Dorsolateral prefrontal cortex (tissue), 120 donors: ENCODE measurements at regions of chr6 and their contacts with region 1.

Region 1: DNA sequence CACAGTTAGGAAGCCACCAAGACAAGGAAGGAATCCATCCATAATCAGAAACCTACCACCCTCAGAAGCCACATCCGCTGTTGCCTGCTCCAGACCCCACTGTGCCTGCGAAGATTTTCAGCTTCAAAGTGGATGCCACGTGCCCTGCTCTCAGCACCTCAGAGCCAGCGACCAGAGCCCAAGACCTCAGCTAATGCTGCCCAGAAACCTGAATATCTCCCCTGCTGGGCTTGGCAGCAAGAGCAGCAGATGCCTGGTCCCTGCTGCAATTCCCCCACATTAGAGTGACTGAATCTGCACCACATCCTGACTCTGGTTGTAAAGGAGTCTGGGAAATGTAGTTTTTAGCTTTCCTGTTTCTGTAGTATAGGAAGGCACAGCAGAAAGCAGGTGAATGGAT is 10.7 kb upstream of the ULBP3 start:
- DNase-seq: peak in 1 of 10 donors; percentile 38
- H3K4me3 ChIP-seq: peak overlapping the region in 34 of 59 donors; percentile 4 to 48 (median 28)
- H3K27ac ChIP-seq: peak overlapping the region in 9 of 59 donors; percentile 13 to 70 (median 42)
- H3K27me3 ChIP-seq: peaks cover 0 to 8% (median 0%) of the 10 kb centered on the region in 45 donors
- CTCF ChIP-seq: no peak

Region 2: DNA sequence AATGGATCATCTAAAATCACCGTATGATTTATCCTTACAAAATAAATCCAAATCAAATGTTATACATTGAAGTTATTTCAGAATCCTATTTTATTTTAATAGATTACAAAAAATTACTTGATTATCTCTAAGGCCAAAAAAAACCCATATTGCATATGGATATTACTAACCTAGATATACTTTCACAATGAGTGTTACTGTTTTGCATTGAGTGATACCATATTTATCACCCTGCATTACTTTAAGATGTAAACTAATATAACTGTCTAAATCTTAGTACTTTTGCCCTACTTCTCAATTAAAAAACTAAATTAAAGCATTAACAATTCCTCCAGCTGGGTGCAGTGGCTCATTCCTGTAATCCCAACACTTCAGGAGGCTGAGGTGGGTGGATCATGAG is 544.9 kb before region 1 on chr6:
- intact Hi-C with region 1: no loop called
- DNase-seq: no peak
- H3K4me3 ChIP-seq: no peak overlapping the region
- H3K27ac ChIP-seq: no peak overlapping the region
- H3K27me3 ChIP-seq: no peaks in the 10 kb centered on the region
- CTCF ChIP-seq: no peak

Region 3: GRCh38 chr6:149963462-149964307 is 115.9 kb before region 1 on chr6 and contains the start of gene ULBP1:
- intact Hi-C with region 1: no loop called
- DNase-seq: peak in 7 of 10 donors; percentile 41 to 96 (median 68)
- H3K4me3 ChIP-seq: peak within 1 kb of the TSS; percentile 18 to 70 (median 48)
- H3K27ac ChIP-seq: peak within 1 kb of the TSS in 1 of 59 donors; percentile 70
- H3K27me3 ChIP-seq: peaks cover 0 to 88% (median 58%) of the 10 kb centered on the region in 45 donors
- CTCF ChIP-seq: peak in 2 of 56 donors; percentile 11 to 17
- total RNA-seq, gene ULBP1: 0.12 to 1.1 (median 0.26) TPM in 58 of 120 experiments, not detected in the others

Region 4: DNA sequence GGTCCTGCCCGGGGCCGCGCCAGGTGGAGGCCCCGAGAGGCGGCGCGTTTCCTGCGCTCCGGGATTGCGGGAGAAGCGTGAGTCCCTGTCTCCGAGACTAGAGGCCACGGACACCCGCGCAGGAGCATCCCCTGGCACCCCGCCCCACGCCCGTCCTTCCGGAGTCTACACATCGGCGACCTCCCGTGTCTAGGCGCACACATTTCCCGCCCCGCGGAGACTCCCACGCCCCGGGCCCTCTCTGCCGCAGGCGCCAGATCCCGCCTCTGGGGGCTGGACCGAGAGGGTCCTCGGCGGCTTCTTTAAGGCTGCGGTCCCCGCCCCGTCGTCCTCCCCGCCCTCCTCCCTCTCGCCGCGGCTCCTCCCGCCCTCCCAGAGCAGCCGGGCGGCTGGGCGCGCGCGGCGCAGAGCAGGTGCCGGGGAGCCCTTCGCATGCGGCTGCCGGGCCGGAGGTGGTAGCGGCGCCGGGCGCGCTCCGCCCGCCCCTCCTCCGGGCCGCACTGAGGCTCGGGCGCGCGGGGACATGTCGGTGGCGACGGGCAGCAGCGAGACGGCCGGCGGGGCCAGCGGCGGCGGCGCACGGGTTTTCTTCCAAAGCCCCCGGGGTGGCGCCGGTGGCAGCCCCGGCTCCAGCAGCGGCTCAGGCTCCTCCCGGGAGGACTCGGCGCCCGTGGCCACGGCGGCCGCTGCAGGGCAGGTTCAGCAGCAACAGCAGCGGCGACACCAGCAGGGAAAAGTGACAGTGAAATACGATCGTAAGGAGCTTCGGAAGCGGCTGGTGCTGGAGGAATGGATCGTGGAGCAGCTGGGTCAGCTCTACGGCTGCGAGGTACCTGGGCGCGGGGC is 63.3 kb after region 1 on chr6 and contains the start of gene PPP1R14C:
- intact Hi-C with region 1: loop called in 1 of 2 experiments (anchors 5 kb)
- DNase-seq: peak in 9 of 10 donors; percentile 36 to 79 (median 63)
- H3K4me3 ChIP-seq: peak within 1 kb of the TSS; percentile 43 to 74 (median 62)
- H3K27ac ChIP-seq: peak within 1 kb of the TSS in 50 of 59 donors; percentile 28 to 89 (median 73)
- H3K27me3 ChIP-seq: peaks cover 0 to 68% (median 23%) of the 10 kb centered on the region in 45 donors
- CTCF ChIP-seq: peak in 1 of 56 donors; percentile 12
- total RNA-seq, gene PPP1R14C: 3.3 to 23.5 (median 13.4) TPM

Region 5: GRCh38 chr6:150334790-150335783 is 255.5 kb after region 1 on chr6:
- intact Hi-C with region 1: loop called (anchors 2 to 5 kb)
- DNase-seq: peak in 4 of 10 donors; percentile 18 to 70 (median 37)
- H3K4me3 ChIP-seq: no peak overlapping the region
- H3K27ac ChIP-seq: no peak overlapping the region
- H3K27me3 ChIP-seq: peaks cover 0 to 2% (median 0%) of the 10 kb centered on the region in 45 donors
- CTCF ChIP-seq: peak; percentile 51 to 94 (median 84)